ENCODE measurements at regions of chr11 and their contacts with region 1.

Region 1: GRCh38 chr11:121929581-121929980 is 186.4 kb downstream of the BLID start:
- DNase-seq: no peak
- ATAC-seq: no peak
- H3K4me3 ChIP-seq: no peak overlapping the region; a peak in 1 of 4 replicates
- H3K27ac ChIP-seq: no peak overlapping the region
- H3K4me1 ChIP-seq: no peaks in the 10 kb centered on the region
- H3K27me3 ChIP-seq: no peaks in the 10 kb centered on the region
- CTCF ChIP-seq: no peak

Region 2: DNA sequence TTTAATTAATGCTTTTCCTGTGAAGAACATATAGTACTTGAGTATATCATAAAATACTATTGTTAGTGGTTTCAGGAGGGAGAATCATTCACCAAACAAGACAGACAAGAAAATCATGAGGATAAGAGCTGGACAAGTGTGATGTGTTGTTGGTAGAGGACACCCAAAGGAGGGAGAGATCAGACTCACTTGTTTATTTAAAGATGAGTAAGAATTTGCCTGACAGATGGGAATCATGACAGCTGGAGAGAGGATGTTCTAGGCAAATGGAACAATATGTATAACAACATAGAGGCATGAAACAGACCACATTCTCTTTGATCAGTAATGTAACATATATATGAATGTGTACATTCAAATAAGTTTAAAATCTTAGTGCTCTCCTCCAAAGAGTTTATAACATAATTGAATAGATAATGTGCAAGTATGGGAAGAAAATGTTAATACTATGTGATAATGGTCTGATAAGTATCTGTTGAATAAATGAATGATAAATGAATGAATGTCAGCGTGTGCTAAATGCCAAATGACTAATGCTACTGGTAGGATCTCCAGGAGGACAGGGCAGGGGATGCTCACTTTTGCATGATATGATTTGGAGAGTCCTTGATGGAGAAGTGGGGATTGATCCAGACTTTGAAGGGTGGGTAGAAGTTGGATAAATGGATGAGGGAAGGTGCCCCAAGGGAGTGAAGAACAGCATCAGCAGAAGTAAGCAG is 247.9 kb before region 1 on chr11:
- CTCF ChIA-PET with region 1: no interaction called
- POLR2A ChIA-PET with region 1: interaction called, 11 read pairs
- in situ Hi-C with region 1: no loop called
- intact Hi-C with region 1: no loop called
- DNase-seq: no peak
- ATAC-seq: no peak
- H3K4me3 ChIP-seq: no peak overlapping the region
- H3K27ac ChIP-seq: no peak overlapping the region
- H3K4me1 ChIP-seq: no peaks in the 10 kb centered on the region
- H3K27me3 ChIP-seq: peaks cover 3% of the 10 kb centered on the region; the same call in 1 of the 2 replicates
- CTCF ChIP-seq: no peak

Region 3: DNA sequence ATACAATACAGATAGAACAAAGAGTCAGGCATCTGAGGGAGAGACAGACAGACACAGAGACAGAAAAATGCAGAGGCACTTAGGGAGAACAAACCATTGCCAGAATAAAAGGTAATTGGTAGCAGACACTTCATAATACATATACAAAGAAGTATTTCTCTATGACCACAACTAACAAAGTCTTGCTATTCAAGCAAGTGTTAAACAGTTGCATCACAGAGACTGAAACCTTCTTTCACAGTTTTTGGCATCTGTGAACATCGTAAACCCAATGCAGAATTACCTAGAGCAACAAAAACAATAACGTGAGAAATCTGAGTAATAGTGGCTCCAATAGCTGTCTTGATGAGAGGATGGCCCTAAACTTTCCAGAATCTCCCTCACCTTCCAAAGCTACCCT is 70.1 kb after region 1 on chr11:
- CTCF ChIA-PET with region 1: no interaction called
- POLR2A ChIA-PET with region 1: no interaction called
- in situ Hi-C with region 1: no loop called
- intact Hi-C with region 1: no loop called
- DNase-seq: no peak
- ATAC-seq: no peak
- H3K4me3 ChIP-seq: no peak overlapping the region
- H3K27ac ChIP-seq: no peak overlapping the region
- H3K4me1 ChIP-seq: no peaks in the 10 kb centered on the region
- H3K27me3 ChIP-seq: no peaks in the 10 kb centered on the region
- CTCF ChIP-seq: no peak